K562 (cell line): ENCODE measurements at regions of chr22 and their contacts with region 1.

Region 1: GRCh38 chr22:21593406-21594232 is 26.1 kb downstream of the UBE2L3 start:
- DNase-seq: peak; percentile 87 to 92 (median 88)
- ATAC-seq: peak; percentile 89
- H3K4me3 ChIP-seq: no peak overlapping the region
- H3K27ac ChIP-seq: no peak overlapping the region
- H3K4me1 ChIP-seq: peaks cover 7 to 12% of the 10 kb centered on the region in 2 experiments; a peak in 4 of 5 replicates
- H3K27me3 ChIP-seq: no peaks in the 10 kb centered on the region; a peak in 1 of 5 replicates
- CTCF ChIP-seq: peak; percentile 96 to 100 (median 98)
- EP300 ChIP-seq: 0 out of 2 replicates have a peak, but pooled peaks have one; percentile 7
- POLR2A ChIP-seq: no peak
- RAD21 ChIP-seq: peak; percentile 53 to 97; a peak in 3 of 4 replicates

Region 2: GRCh38 chr22:21606775-21607174 is 13.2 kb after region 1 on chr22:
- CTCF ChIA-PET with region 1: interaction called, 3 read pairs
- POLR2A ChIA-PET with region 1: interaction called, 4,622 read pairs
- in situ Hi-C with region 1: no loop called
- intact Hi-C with region 1: loop called (anchors 2 kb)
- DNase-seq: peak in 3 of 4 experiments; percentile 59 to 73 (median 66)
- ATAC-seq: peak; percentile 18
- H3K4me3 ChIP-seq: no peak overlapping the region
- H3K27ac ChIP-seq: peak overlapping the region; percentile 9; the same call in 2 of the 3 replicates
- H3K4me1 ChIP-seq: peaks cover 26% of the 10 kb centered on the region in 2 experiments
- H3K27me3 ChIP-seq: peaks cover 0 to 2% of the 10 kb centered on the region in 2 experiments; a peak in 1 of 5 replicates
- CTCF ChIP-seq: 0 out of 6 replicates have a peak, but pooled peaks of 1 of the 3 experiments have one; percentile 8
- EP300 ChIP-seq: no peak
- POLR2A ChIP-seq: no peak
- RAD21 ChIP-seq: no peak

Region 3: GRCh38 chr22:21778705-21779363 is 185.2 kb after region 1 on chr22:
- CTCF ChIA-PET with region 1: no interaction called
- POLR2A ChIA-PET with region 1: no interaction called
- in situ Hi-C with region 1: no loop called
- intact Hi-C with region 1: no loop called
- DNase-seq: peak; percentile 84 to 90 (median 88)
- ATAC-seq: peak; percentile 61
- H3K4me3 ChIP-seq: no peak overlapping the region
- H3K27ac ChIP-seq: peak overlapping the region; percentile 7; the same call in 2 of the 3 replicates
- H3K4me1 ChIP-seq: peaks cover 0 to 12% of the 10 kb centered on the region in 2 experiments; a peak in 2 of 5 replicates
- H3K27me3 ChIP-seq: no peaks in the 10 kb centered on the region
- CTCF ChIP-seq: no peak
- EP300 ChIP-seq: peak; percentile 30; the same call in 1 of the 2 replicates
- POLR2A ChIP-seq: no peak
- RAD21 ChIP-seq: no peak